RWPE1 (cell line): ENCODE measurements at regions of chr18 and their contacts with region 1.

Region 1: DNA sequence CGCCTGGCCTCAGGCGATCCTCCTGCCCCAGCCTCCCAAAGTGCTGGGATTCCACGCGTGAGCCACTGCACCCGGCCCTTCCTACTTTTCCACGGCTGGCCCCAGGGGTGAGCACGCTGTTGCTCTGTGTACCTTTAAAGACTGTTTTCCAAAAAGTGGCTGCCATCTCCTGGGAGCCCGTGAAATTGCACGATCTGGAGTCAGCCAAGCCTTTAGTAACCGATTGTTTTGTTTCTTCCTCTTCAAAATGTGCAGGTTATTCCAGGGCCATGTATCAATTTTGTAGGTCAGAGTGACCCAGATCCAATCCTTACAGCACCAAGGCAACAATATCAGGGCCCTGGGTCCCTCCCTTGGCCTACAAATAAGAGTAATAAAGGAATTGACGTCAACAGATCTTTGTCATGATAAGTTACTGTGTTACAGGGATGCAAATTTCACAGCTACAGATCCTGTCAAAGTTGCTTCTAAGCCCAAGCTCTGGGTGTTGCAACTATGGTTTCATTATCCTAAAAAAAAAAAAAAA is 135.6 kb upstream of the ZNF236 start:
- DNase-seq: peak; percentile 59
- H3K27ac ChIP-seq: no peak overlapping the region
- CTCF ChIP-seq: peak; percentile 86

Region 2: DNA sequence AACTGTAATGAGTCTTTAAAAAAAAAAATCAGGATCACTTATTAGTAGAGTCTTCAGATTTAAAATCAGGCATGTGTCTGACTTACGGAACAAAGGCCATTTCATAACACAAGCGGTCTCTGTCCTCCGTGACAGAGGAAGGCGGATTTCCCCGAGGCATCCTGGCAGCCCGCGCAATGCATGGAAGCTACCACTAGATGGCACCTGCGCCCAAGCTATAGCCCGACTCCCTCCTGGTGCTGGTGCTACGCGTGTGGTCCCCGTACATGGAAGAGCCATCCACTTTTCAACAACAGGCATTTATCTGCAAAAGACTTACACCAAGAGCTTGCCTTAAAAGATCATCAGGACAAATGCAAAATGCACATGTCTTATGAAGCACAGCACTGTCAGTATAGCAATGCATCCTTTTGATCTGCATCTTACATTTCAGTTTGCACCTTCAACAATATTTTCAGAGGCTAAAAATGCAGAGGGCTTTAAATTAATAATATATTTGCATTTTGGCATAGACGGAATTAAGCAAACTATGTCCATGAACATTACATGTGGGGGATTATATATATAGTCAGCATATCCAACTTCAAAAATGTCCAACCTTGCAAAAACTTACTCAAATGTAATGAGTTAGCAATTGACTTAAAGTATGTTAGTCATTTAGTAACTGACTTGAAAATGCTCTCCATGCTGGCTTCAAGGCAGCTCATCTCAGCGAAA is 287.7 kb before region 1 on chr18:
- CTCF ChIA-PET with region 1: interaction called, 10 read pairs
- POLR2A ChIA-PET with region 1: no interaction called
- DNase-seq: peak; percentile 88
- H3K27ac ChIP-seq: no peak overlapping the region
- CTCF ChIP-seq: peak; percentile 99

Region 3: DNA sequence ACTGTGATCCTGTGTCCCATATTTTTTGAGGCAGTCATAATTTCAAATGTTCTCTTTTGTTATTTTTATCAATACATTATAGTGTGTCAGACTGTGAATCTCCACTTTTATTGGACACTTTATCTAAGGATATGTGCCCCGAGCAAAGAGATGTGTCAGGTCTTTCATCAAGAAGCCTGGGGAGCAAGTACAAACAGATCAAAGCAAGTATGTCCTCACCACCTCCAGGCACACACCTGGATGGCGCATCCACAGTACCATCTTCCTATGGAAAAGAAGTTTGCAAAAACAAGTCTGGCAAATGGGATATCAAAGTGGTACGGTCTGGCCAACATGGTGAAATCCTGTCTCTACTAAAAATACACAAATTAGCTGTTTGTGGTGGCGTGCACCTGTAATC is 54.6 kb after region 1 on chr18:
- CTCF ChIA-PET with region 1: no interaction called
- POLR2A ChIA-PET with region 1: no interaction called
- DNase-seq: peak; percentile 36
- H3K27ac ChIP-seq: no peak overlapping the region
- CTCF ChIP-seq: no peak